Prostate gland (tissue), 2 donors: ENCODE measurements at regions of chr11 and their contacts with region 1.

Region 1: GRCh38 chr11:125950696-125951651 is 5.1 kb downstream of the VSIG10L2 start:
- DNase-seq: no peak
- H3K4me3 ChIP-seq: no peak overlapping the region
- H3K27ac ChIP-seq: peak overlapping the region; percentile 48 to 61
- H3K4me1 ChIP-seq: peaks cover 18% of the 10 kb centered on the region
- H3K27me3 ChIP-seq: no peaks in the 10 kb centered on the region
- CTCF ChIP-seq: no peak
- POLR2A ChIP-seq: no peak

Region 2: DNA sequence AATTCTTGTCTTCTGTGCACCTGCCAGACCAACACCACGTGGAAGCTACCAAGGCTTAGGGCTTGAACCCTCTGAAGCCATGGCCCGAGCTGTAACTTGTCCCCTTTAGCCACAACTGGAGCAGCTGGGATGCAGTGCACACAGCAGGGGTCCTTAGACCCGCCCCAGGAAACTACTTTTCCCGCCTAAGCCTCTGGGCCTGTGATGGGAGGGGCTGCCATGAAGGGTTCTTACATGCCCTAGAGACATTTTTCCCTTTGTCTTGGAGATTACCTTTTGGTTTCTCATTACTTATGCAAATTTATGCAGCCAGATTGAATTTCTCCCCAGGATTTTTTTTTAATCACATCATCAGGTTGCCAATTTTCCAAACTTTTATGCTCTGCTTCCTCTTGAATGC is 153.3 kb before region 1 on chr11:
- intact Hi-C with region 1: no loop called
- DNase-seq: no peak
- H3K4me3 ChIP-seq: no peak overlapping the region
- H3K27ac ChIP-seq: no peak overlapping the region
- H3K4me1 ChIP-seq: no peaks in the 10 kb centered on the region
- H3K27me3 ChIP-seq: no peaks in the 10 kb centered on the region
- CTCF ChIP-seq: no peak
- POLR2A ChIP-seq: no peak

Region 3: GRCh38 chr11:125990244-125990643 is 39.3 kb after region 1 on chr11:
- intact Hi-C with region 1: no loop called
- DNase-seq: no peak
- H3K4me3 ChIP-seq: no peak overlapping the region
- H3K27ac ChIP-seq: no peak overlapping the region
- H3K4me1 ChIP-seq: no peaks in the 10 kb centered on the region
- H3K27me3 ChIP-seq: no peaks in the 10 kb centered on the region
- CTCF ChIP-seq: no peak
- POLR2A ChIP-seq: no peak

Region 4: GRCh38 chr11:126011265-126011664 is 60.3 kb after region 1 on chr11:
- intact Hi-C with region 1: loop called (anchors 10 kb)
- DNase-seq: no peak
- H3K4me3 ChIP-seq: no peak overlapping the region
- H3K27ac ChIP-seq: no peak overlapping the region
- H3K4me1 ChIP-seq: no peaks in the 10 kb centered on the region
- H3K27me3 ChIP-seq: no peaks in the 10 kb centered on the region
- CTCF ChIP-seq: no peak
- POLR2A ChIP-seq: no peak